MCF 10A (cell line): ENCODE measurements at regions of chr10 and their contacts with region 1.

Region 1: GRCh38 chr10:80924063-80924952 is 386.6 kb downstream of the SH2D4B start:
- DNase-seq: peak; percentile 64
- H3K4me3 Mint-ChIP-seq: no peak overlapping the region
- H3K27ac Mint-ChIP-seq: no peak overlapping the region
- H3K4me1 Mint-ChIP-seq: no peaks in the 10 kb centered on the region
- H3K27me3 Mint-ChIP-seq: peaks cover 48% of the 10 kb centered on the region
- CTCF ChIP-seq: peak; percentile 56

Region 2: DNA sequence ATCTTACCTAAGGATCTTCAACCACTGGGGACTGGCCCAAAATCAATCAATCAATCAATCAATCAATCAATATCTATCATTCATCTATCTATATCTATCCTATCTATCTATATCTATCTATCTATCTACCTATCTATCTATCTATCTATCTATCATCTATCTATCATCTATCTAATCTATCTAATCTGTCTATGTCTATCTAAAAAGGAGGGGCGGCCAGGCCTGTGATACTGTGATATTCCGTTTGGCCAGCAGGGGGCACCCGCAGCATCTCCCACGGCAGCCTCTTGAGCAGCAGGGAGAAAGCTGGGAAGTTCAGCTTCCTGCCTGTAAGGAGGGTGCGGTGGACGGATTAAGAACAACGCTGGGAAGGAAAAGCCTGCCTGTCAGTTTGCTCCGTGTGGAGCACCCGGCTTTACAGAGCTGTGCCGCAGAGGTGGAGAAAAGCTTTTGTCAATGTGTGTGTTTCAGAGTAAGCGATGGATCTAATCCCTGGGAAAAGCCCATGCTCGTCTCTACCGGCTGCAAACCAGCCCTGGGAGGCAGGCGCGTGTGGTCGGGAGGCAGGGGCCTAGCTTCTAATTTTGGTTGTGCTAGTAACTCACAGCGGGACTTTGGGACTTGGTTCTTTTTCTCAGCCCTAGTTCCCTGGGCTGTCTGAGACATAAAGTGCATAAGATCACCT is 261.6 kb before region 1 on chr10:
- CTCF ChIA-PET with region 1: interaction called, 77 read pairs
- POLR2A ChIA-PET with region 1: no interaction called
- intact Hi-C with region 1: loop called (anchors 1 kb)
- DNase-seq: peak; percentile 74
- H3K4me3 Mint-ChIP-seq: no peak overlapping the region
- H3K27ac Mint-ChIP-seq: no peak overlapping the region
- H3K4me1 Mint-ChIP-seq: no peaks in the 10 kb centered on the region
- H3K27me3 Mint-ChIP-seq: peaks cover 19% of the 10 kb centered on the region
- CTCF ChIP-seq: peak; percentile 81

Region 3: GRCh38 chr10:80709866-80710265 is 214.4 kb before region 1 on chr10:
- CTCF ChIA-PET with region 1: interaction called, 15 read pairs
- POLR2A ChIA-PET with region 1: no interaction called
- intact Hi-C with region 1: no loop called
- DNase-seq: no peak
- H3K4me3 Mint-ChIP-seq: no peak overlapping the region
- H3K27ac Mint-ChIP-seq: no peak overlapping the region
- H3K4me1 Mint-ChIP-seq: no peaks in the 10 kb centered on the region
- H3K27me3 Mint-ChIP-seq: peaks cover 83% of the 10 kb centered on the region
- CTCF ChIP-seq: no peak

Region 4: DNA sequence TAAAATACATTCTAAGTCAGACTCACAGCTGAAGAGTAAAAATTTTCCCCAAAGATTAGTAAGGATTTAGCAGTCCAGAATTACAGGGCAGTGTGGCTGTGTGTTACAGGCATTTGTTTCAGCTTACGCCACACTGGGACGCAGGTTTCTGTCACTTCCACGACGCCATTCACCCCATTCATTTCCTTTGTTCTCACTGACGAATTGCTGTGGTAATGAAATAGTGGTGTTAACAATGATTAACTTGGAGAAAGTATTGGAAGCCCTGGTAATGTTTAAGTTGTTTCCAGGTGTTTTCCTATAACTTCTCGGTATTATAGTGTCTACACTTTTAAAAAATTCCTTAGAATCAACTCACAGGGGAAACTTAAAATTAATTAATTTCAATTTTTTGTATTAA is 15.7 kb before region 1 on chr10:
- CTCF ChIA-PET with region 1: interaction called, 31 read pairs
- POLR2A ChIA-PET with region 1: no interaction called
- intact Hi-C with region 1: no loop called
- DNase-seq: no peak
- H3K4me3 Mint-ChIP-seq: no peak overlapping the region
- H3K27ac Mint-ChIP-seq: no peak overlapping the region
- H3K4me1 Mint-ChIP-seq: no peaks in the 10 kb centered on the region
- H3K27me3 Mint-ChIP-seq: peaks cover 47% of the 10 kb centered on the region
- CTCF ChIP-seq: no peak

Region 5: GRCh38 chr10:81013771-81014170 is 89.5 kb after region 1 on chr10:
- CTCF ChIA-PET with region 1: interaction called, 24 read pairs
- POLR2A ChIA-PET with region 1: no interaction called
- intact Hi-C with region 1: no loop called
- DNase-seq: no peak
- H3K4me3 Mint-ChIP-seq: no peak overlapping the region
- H3K27ac Mint-ChIP-seq: no peak overlapping the region
- H3K4me1 Mint-ChIP-seq: peaks cover 7% of the 10 kb centered on the region
- H3K27me3 Mint-ChIP-seq: peaks cover 58% of the 10 kb centered on the region
- CTCF ChIP-seq: no peak